HepG2 (cell line): ENCODE measurements at regions of chr17 and their contacts with region 1.

Region 1: GRCh38 chr17:55053855-55054254 is 85.3 kb downstream of the STXBP4 start:
- DNase-seq: no peak
- ATAC-seq: no peak
- H3K4me3 ChIP-seq: no peak overlapping the region
- H3K27ac ChIP-seq: no peak overlapping the region
- H3K4me1 ChIP-seq: no peaks in the 10 kb centered on the region
- H3K27me3 ChIP-seq: no peaks in the 10 kb centered on the region
- CTCF ChIP-seq: peak; percentile 46
- EP300 ChIP-seq: no peak
- POLR2A ChIP-seq: no peak
- RAD21 ChIP-seq: peak; percentile 43; the same call in 1 of the 2 replicates

Region 2: GRCh38 chr17:54085934-54086333 is 967.9 kb before region 1 on chr17:
- CTCF ChIA-PET with region 1: no interaction called
- POLR2A ChIA-PET with region 1: no interaction called
- in situ Hi-C with region 1: no loop called
- intact Hi-C with region 1: no loop called
- DNase-seq: no peak
- ATAC-seq: no peak
- H3K4me3 ChIP-seq: no peak overlapping the region
- H3K27ac ChIP-seq: no peak overlapping the region
- H3K4me1 ChIP-seq: no peaks in the 10 kb centered on the region
- H3K27me3 ChIP-seq: no peaks in the 10 kb centered on the region
- CTCF ChIP-seq: no peak
- EP300 ChIP-seq: no peak
- POLR2A ChIP-seq: no peak
- RAD21 ChIP-seq: no peak

Region 3: DNA sequence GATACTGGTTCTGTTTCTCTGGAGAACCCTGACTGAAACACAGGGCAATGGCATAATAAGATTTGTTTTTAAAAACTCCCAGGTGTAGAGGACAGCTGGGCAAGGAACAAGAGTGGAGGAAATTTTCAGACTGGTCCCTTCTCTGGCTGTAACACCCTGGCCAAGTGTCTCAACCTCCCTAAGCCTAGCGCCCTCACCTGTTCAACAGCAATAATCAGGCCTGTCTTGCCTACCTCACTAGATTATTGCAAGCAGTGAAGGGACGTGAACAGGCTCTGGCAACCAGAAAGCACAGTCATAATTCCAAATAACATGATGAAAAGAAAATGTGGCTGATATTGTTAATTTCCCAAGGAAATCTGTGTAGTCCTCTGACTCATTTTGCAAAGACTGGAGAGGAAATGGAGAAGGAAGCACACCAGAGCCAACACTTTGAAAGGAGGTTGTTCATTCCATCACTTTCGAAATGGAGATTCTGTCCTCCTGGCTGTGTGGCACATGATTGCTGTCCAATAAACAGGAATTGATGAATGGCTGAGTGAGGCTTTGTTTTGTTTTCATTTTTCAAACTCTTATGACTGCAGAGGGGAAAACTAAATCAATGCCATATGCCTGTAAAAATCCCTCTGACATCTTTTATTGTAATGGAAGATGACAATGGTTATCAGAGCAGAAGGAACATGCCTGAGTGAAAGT is 123.5 kb after region 1 on chr17:
- CTCF ChIA-PET with region 1: no interaction called
- POLR2A ChIA-PET with region 1: no interaction called
- in situ Hi-C with region 1: no loop called
- intact Hi-C with region 1: loop called (anchors 10 kb)
- DNase-seq: peak; percentile 28
- ATAC-seq: peak; percentile 87
- H3K4me3 ChIP-seq: no peak overlapping the region
- H3K27ac ChIP-seq: no peak overlapping the region
- H3K4me1 ChIP-seq: no peaks in the 10 kb centered on the region
- H3K27me3 ChIP-seq: no peaks in the 10 kb centered on the region
- CTCF ChIP-seq: peak; percentile 61
- EP300 ChIP-seq: no peak
- POLR2A ChIP-seq: no peak
- RAD21 ChIP-seq: 0 out of 2 replicates have a peak, but pooled peaks have one; percentile 11

Region 4: DNA sequence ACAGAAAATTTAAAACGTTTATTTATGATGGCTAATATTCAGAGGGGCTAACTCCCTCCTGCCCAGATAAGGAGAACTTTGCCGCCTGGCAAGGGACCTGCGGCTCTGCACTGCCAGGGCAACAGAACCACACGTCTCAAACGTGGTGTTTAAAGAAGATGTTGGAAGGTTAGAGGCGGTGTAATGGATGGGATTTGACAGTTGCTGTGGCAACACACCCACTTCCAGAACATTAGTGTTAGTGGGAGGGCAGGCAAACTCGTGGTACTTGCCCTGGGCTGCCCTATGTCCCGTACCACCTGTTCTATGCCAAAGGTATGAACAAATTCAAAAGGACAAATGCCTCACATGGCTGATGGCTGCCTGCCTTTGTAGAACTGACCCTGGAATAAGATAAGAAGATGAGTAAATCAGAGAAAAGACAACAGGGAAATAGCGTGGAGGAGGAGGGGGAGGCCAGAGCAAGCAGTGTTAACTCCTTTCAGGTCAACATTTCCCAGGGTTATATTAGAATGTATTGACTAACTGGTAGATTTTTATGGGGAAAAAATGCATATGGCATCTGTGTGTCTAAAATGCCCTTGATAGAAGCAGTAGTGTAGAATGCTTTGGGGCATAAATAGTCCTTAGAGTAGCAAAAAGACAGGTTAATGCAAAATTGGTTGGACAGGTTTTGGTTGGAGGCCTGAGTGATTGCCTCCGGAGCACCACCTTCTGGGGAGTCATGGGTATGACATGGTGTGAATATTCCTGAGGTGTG is 241.7 kb after region 1 on chr17:
- CTCF ChIA-PET with region 1: interaction called, 4 read pairs
- POLR2A ChIA-PET with region 1: no interaction called
- in situ Hi-C with region 1: no loop called
- intact Hi-C with region 1: loop called (anchors 2 kb)
- DNase-seq: peak; percentile 77
- ATAC-seq: peak; percentile 63
- H3K4me3 ChIP-seq: no peak overlapping the region
- H3K27ac ChIP-seq: peak overlapping the region; percentile 38
- H3K4me1 ChIP-seq: peaks cover 100% of the 10 kb centered on the region
- H3K27me3 ChIP-seq: no peaks in the 10 kb centered on the region
- CTCF ChIP-seq: peak; percentile 83
- EP300 ChIP-seq: no peak; a peak in 1 of 4 replicates
- POLR2A ChIP-seq: peak; percentile 52 to 56; a peak in 2 of 4 replicates
- RAD21 ChIP-seq: peak; percentile 83